Heart left ventricle (tissue), 16 donors: ENCODE measurements at regions of chr15 and their contacts with region 1.

Region 1: DNA sequence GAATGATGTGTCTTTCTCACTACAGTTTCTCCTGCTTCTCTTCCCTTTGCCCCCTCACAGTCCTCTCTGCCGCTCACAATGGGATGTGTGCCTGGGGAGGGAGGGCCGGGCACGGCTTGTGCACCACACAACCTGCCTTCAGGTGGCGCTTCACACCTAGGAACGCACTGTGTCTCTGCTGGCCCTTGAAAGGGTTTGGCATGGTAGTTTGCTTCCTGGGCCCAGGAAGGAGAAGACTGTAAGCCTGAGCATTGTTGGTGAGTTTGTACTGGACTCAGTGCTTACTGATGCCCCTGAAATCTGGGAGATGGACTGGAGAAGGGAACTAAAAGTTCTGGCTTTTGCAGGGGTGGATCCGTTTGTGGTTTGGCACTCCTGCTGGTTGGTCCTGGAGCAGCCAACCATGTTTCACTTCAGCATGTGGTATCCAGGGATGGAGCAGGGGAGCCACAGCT is 9.2 kb downstream of the ALPK3 start:
- DNase-seq: peak in 3 of 5 donors; percentile 38 to 47 (median 46)
- ATAC-seq: peak; percentile 16 to 37 (median 24)
- H3K4me3 ChIP-seq: no peak overlapping the region
- H3K27ac ChIP-seq: peak overlapping the region in 11 of 12 donors; percentile 54 to 99 (median 96)
- H3K4me1 ChIP-seq: peaks cover 10 to 100% (median 94%) of the 10 kb centered on the region in 12 donors
- H3K27me3 ChIP-seq: no peaks in the 10 kb centered on the region
- CTCF ChIP-seq: peak in 10 of 12 donors; percentile 8 to 43 (median 30)
- POLR2A ChIP-seq: no peak

Region 2: DNA sequence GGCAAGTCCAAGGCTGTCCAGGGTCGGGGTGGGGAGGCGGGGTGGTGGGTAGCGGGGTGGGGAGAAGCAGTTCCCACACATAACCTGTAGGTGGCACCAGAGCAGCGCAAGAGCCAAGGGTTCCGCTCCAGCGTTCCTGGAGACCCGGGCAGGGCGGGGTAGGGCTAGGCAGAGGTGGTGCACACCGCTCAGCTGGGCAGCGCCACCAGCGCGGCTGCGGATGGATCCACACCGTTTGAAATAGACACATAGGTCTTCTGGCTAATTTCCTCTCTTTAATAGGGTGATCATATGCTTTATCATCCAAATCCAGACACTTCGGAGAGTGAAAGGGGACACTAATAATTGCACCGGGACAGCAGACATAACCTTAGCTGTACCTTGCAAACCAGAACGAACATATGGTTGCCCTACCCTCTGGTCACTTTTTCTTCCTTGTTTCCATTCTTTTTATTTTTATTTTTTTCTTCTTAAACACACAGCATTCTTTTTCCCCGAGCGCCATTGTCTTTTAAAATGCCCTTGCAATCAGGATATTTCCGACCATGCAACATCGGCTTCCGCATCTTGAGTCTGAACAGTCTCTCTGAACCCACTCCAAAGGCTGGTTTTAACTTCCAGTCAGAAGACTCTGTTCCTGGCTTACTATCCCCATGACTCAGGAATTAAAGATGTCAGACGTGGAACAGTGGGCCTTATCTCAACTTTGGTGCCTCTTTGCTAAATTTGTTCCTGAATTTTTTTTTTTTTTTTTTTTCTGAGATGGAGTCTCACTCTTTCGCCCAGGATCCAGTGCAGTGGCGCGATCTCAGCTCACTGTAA is 238.1 kb before region 1 on chr15:
- intact Hi-C with region 1: loop called in 1 of 10 experiments (anchors 10 kb)
- DNase-seq: peak; percentile 84 to 92 (median 87)
- ATAC-seq: peak; percentile 98 to 99 (median 99)
- H3K4me3 ChIP-seq: peak overlapping the region in 10 of 12 donors; percentile 25 to 58 (median 44)
- H3K27ac ChIP-seq: no peak overlapping the region
- H3K4me1 ChIP-seq: peaks cover 0 to 10% (median 3%) of the 10 kb centered on the region in 12 donors
- H3K27me3 ChIP-seq: no peaks in the 10 kb centered on the region
- CTCF ChIP-seq: peak; percentile 82 to 98 (median 90)
- POLR2A ChIP-seq: no peak

Region 3: GRCh38 chr15:84621358-84621979 is 204.9 kb before region 1 on chr15:
- intact Hi-C with region 1: no loop called
- DNase-seq: no peak
- ATAC-seq: no peak
- H3K4me3 ChIP-seq: no peak overlapping the region
- H3K27ac ChIP-seq: no peak overlapping the region
- H3K4me1 ChIP-seq: peaks cover 0 to 11% (median 0%) of the 10 kb centered on the region in 12 donors
- H3K27me3 ChIP-seq: no peaks in the 10 kb centered on the region
- CTCF ChIP-seq: no peak
- POLR2A ChIP-seq: no peak

Region 4: DNA sequence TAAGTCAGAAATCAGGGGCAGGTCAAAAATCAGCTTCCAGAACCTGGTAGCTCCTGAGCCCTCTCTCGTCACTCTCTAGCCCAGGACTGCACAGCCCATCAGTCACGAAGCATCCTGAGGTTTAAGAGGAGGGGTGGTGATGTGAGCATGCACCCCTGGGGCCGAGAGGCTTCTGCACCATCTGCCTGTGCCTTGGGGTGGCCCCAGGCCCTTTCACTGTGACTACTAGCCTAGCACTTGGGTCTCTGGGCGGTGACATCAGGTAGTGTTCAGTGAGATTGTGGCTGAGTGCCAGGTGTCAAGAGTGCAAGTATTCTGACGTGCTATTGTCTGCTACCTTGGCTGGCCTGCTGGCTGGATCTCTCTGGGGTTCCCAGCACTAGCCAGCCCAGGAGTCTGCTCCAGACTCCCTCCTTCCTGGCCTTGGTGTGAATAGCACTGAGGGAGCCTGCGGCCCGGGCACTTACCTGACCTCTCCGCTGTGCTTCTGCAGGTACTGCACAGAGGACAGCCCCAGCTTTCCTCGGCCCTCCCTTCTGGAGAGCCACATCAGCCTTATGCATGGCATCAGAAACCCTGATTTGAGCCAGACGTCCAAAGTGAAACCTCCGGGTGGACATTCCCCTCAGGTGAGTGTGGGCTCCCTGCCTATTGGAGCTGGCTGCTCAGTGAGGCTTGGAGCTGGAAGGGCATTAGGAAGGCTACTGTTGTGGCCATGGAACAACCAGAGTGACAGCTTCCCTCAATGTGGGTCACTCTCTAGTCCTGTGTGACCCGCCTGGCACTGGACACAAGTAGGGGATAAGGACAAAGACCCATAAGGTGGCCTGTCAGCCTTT is 26.8 kb before region 1 on chr15:
- intact Hi-C with region 1: no loop called
- DNase-seq: no peak
- ATAC-seq: peak in 3 of 4 donors; percentile 16 to 55 (median 53)
- H3K4me3 ChIP-seq: no peak overlapping the region
- H3K27ac ChIP-seq: no peak overlapping the region
- H3K4me1 ChIP-seq: peaks cover 0 to 8% (median 0%) of the 10 kb centered on the region in 12 donors
- H3K27me3 ChIP-seq: no peaks in the 10 kb centered on the region
- CTCF ChIP-seq: no peak
- POLR2A ChIP-seq: no peak

Region 5: DNA sequence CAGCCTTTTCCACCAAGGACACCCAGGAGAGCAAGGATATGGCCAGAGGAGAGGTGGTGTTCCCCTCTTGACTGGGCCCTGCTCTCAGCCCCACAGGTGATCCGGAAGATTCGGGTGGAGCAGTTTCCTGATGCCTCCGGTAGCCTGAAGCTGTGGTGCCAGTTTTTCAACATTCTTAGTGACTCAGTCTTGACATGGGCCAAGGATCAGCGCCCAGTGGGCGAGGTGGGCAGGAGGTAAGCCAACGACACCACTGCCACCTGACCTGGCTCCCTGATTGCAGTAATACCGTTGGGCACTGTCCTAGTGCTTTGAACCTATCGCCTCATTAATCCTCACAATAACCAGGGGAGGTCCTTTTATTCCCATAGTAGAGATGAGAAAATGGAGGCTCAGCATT is 32.8 kb after region 1 on chr15:
- intact Hi-C with region 1: no loop called
- DNase-seq: peak in 1 of 5 donors; percentile 57
- ATAC-seq: no peak
- H3K4me3 ChIP-seq: no peak overlapping the region
- H3K27ac ChIP-seq: peak overlapping the region in 1 of 12 donors; percentile 29
- H3K4me1 ChIP-seq: peaks cover 0 to 58% (median 26%) of the 10 kb centered on the region in 12 donors
- H3K27me3 ChIP-seq: no peaks in the 10 kb centered on the region
- CTCF ChIP-seq: no peak
- POLR2A ChIP-seq: no peak

Region 6: GRCh38 chr15:84871428-84872305 is 45.3 kb after region 1 on chr15:
- intact Hi-C with region 1: loop called in 1 of 10 experiments (anchors 5 kb)
- DNase-seq: no peak
- ATAC-seq: peak; percentile 13 to 21 (median 15)
- H3K4me3 ChIP-seq: no peak overlapping the region
- H3K27ac ChIP-seq: peak overlapping the region in 1 of 12 donors; percentile 17
- H3K4me1 ChIP-seq: peaks cover 0 to 12% (median 0%) of the 10 kb centered on the region in 12 donors
- H3K27me3 ChIP-seq: no peaks in the 10 kb centered on the region
- CTCF ChIP-seq: peak in 3 of 12 donors; percentile 4 to 16 (median 16)
- POLR2A ChIP-seq: no peak

Region 7: DNA sequence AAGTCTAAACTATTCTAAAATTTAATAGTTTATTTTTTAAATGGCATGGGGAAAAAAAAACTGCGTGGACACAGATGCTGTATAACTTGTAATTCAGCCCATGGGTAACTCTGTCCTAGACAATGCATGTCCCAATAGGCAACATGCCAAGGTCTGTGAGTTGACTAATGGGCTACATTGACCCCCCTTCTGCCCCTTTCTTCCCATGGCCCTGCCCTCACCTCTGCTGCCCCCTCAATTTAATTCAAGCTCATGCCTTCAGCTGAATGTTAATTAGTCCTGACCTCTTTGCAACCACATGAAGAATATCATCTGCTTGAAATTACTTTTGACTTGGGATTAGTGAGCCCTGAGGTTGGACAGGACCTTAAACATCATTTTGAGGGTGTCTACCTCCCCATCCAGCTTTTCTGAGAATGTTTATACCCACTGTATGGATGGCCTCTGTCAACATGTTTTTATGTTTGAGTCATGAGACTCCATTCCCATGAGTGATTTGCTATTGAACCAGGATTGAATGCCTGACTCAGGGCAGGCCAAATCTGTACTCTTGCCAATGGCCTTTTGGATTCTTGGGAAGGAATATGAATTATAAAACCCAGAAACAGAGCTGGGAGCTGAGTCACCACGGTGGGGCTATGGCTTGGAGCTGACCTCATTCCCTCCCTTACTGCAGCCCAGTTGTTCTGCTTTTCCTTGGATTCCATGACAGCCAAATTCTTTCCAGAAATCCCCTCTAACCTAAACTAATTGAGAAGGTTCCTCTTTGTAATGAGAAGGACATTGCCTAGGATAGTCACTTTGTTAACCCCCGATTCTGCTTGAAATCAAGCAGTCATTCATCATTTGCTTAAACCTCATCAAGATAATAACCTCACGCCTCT is 121.8 kb after region 1 on chr15:
- intact Hi-C with region 1: no loop called
- DNase-seq: peak in 3 of 5 donors; percentile 31 to 70 (median 52)
- ATAC-seq: peak in 3 of 4 donors; percentile 43 to 77 (median 52)
- H3K4me3 ChIP-seq: no peak overlapping the region
- H3K27ac ChIP-seq: peak overlapping the region in 8 of 12 donors; percentile 9 to 69 (median 38)
- H3K4me1 ChIP-seq: peaks cover 0 to 30% (median 15%) of the 10 kb centered on the region in 12 donors
- H3K27me3 ChIP-seq: no peaks in the 10 kb centered on the region
- CTCF ChIP-seq: no peak
- POLR2A ChIP-seq: no peak